IMR-90 (cell line): ENCODE measurements at regions of chr1 and their contacts with region 1.

Region 1: DNA sequence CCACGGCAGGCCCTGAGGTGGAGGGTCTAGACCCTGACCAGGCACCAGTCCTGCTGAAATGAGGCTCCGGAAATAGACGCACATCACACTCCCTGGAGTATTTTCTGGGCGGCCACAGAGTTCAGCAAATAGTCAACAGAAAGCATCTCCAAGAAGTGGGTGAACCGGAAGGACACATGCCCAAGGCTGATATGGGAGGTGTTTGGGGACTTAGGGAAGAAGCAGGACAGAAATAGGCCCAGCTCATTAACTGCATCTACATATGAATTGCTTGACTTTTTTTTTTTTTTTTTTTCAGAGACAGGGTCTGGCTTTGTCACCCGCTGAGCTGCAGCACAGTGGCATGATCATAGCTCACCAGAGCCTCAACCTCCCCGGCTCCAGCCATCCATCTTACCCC is 36.5 kb upstream of the GPR157 start:
- DNase-seq: no peak
- ATAC-seq: no peak
- H3K4me3 ChIP-seq: no peak overlapping the region
- H3K27ac ChIP-seq: no peak overlapping the region
- H3K4me1 ChIP-seq: peaks cover 31% of the 10 kb centered on the region
- H3K27me3 ChIP-seq: no peaks in the 10 kb centered on the region
- CTCF ChIP-seq: no peak
- POLR2A ChIP-seq: no peak
- RAD21 ChIP-seq: no peak

Region 2: DNA sequence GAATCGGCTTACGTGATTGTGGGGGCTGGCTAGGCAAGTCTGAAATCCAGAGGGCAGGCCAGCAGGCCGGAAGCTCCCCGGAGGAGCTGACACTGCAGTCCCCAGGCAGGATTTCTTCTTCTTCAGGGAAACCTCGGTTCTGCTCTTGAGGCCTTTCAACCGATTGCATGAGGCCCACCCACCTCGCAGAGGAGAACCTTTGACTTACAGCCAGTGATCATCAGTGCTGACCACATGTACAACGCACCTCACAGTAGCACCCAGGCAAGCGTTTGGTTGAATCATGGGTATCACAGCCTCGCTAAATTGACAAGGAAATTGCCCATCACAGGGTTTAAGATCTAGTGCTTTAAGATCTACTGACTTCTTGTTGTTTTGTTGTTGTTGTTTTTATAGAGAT is 12.9 kb before region 1 on chr1:
- CTCF ChIA-PET with region 1: no interaction called
- POLR2A ChIA-PET with region 1: no interaction called
- dilution Hi-C with region 1: no loop called
- in situ Hi-C with region 1: no loop called
- intact Hi-C with region 1: no loop called
- DNase-seq: no peak
- ATAC-seq: no peak
- H3K4me3 ChIP-seq: no peak overlapping the region
- H3K27ac ChIP-seq: no peak overlapping the region
- H3K4me1 ChIP-seq: peaks cover 10% of the 10 kb centered on the region; the same call in 1 of the 2 replicates
- H3K27me3 ChIP-seq: no peaks in the 10 kb centered on the region
- CTCF ChIP-seq: no peak
- POLR2A ChIP-seq: no peak
- RAD21 ChIP-seq: no peak

Region 3: DNA sequence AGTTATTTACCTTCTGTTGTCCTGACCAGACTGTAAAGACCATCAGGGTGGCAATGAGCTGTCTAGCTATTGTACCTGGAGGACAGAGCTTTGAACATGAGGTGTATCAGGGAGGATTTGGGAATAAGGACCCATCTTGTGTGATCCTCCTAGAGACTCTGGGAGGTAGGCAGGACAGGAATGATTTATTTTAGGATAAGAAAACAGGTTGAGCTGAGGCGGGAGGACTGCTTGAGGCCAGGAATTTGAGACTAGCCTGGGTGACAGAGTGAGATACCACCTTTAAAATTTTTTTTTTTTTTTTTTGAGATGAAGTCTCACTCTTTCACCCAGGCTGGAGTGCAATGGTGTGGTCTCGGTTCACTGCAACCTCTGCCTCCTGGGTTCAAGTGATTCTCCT is 10.2 kb after region 1 on chr1:
- CTCF ChIA-PET with region 1: interaction called, 3 read pairs
- POLR2A ChIA-PET with region 1: interaction called, 16 read pairs
- dilution Hi-C with region 1: no loop called
- in situ Hi-C with region 1: no loop called
- intact Hi-C with region 1: no loop called
- DNase-seq: no peak
- ATAC-seq: no peak
- H3K4me3 ChIP-seq: no peak overlapping the region
- H3K27ac ChIP-seq: no peak overlapping the region
- H3K4me1 ChIP-seq: peaks cover 3% of the 10 kb centered on the region
- H3K27me3 ChIP-seq: no peaks in the 10 kb centered on the region
- CTCF ChIP-seq: no peak
- POLR2A ChIP-seq: no peak
- RAD21 ChIP-seq: no peak